Ovary (tissue), 10 donors: ENCODE measurements at regions of chr5 and their contacts with region 1.

Region 1: DNA sequence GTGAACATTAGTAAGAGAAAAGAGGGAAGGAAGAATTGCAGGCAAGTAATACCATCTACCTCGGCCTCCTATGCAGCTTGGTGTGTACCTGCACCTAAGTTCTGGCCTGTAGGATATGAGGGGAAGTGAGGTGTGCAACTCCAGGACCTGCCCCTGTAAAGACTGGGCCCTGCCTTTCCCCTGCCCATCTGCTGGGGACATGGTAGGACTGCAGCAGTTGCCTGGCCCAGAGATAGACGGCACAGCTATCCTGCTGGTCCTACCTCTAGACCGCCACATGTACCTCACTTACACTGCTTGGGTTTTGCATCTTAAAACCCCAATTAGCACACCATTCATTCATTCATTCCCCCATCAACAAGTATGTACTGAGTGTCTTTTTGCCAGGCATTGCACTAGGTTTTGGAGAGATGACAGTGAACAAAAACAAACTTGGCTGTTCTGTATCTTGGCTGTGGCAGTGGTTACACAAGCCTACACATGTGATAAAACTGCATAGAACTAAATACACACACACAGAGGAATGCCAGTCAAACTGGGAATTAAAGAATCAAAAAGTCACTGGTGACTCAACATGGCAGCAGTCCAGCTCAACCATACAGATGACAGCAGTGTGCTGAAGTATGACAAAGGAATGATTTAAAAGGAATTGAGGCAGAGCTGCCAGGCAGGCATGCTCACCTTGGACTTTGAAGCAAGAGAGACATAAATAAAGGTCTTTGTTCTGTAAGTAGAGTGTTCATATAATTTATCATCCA is 23.3 kb upstream of the MGAT1 start:
- DNase-seq: no peak
- H3K4me3 ChIP-seq: no peak overlapping the region
- H3K27ac ChIP-seq: no peak overlapping the region
- H3K4me1 ChIP-seq: no peaks in the 10 kb centered on the region
- H3K27me3 ChIP-seq: no peaks in the 10 kb centered on the region
- CTCF ChIP-seq: no peak
- EP300 ChIP-seq: no peak
- POLR2A ChIP-seq: no peak

Region 2: DNA sequence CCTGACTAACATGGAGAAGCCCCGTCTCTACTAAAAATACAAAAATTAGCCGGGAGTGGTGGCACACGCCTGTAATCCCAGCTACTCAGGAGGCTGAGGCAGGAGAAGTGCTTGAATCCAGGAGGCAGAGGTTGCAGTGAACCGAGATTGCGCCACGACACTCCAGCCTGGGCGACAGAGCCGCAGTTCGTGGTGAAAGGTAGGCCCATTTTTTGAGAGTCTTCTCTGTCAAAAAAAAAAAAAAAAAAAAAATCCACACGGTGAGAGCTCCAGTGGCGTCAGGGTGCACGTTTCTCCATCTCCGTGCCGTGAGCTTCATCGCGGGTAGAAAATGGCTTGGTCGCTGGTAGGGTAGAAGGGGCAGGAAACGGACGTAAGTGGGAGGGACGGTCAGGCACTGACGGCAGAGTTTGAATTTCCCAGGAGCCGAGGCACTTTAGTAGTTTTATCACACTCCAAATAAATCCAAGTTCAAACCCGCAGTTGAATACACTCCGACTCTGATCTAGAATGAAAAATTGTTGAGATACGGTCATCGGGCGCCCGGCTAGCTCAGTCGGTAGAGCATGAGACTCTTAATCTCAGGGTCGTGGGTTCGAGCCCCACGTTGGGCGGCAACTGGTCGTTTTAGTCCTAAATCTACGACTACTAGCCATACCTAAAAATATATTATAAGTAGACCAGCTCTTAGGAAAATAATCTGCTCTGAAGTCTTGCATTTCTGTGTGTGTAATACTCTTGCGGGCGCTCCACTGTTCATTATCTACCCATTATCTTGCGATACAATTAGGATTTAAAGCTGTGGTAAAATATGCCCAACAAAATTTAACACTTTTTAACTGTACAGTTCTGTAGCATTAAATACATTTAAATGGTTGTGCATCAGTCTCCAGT is 381.5 kb after region 1 on chr5:
- intact Hi-C with region 1: loop called in 1 of 4 experiments (anchors 10 kb)
- DNase-seq: peak; percentile 71 to 87 (median 82)
- H3K4me3 ChIP-seq: peak overlapping the region; percentile 52
- H3K27ac ChIP-seq: peak overlapping the region; percentile 40 to 79
- H3K4me1 ChIP-seq: peaks cover 12% of the 10 kb centered on the region
- H3K27me3 ChIP-seq: no peaks in the 10 kb centered on the region
- CTCF ChIP-seq: no peak
- EP300 ChIP-seq: no peak
- POLR2A ChIP-seq: no peak